ENCODE measurements at regions of chr21 and their contacts with region 1.

Region 1: DNA sequence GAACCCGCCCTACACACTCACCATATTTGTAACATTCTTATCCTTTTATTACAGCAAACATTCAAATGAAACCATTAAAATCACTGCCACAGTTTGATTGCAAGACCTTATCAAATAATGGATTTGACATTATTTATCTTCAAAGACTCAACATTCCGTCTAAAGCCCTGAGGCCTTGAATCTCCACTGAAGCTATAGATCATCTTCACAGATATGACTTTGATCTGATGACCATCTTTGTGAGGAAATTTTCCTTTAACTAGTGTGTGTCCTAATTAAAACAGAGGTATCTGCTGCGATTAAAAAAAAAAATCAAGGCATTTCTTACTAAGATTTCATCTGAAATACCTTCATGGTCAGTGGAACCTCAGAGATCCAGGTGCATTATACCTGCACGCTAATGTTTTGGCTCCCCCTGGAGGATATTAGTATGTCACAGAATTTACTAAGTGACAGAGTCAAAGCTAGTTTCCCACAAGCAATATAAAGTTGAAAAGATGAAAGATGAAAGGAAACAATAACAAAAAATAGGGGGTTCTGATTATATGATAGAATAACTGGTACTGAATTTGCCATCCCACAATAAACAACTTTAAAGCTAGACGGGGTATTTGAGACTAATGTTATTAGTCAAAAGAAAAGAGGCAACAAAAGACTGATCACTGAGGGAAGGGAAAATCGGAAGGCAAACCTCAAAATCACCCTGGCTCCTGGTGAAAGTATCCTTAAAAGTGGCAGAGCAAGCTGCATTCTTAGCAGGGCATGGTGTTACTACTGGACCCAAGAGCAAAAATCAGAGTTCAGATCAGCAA is 923.4 kb downstream of the NCAM2 start:
- DNase-seq: peak in 2 of 14 experiments; percentile 1 to 3
- ATAC-seq: no peak
- H3K4me3 ChIP-seq: no peak overlapping the region
- H3K4me3 Mint-ChIP-seq: no peak overlapping the region
- H3K27ac ChIP-seq: no peak overlapping the region
- H3K27ac Mint-ChIP-seq: no peak overlapping the region
- H3K4me1 ChIP-seq: no peaks in the 10 kb centered on the region
- H3K4me1 Mint-ChIP-seq: no peaks in the 10 kb centered on the region
- H3K27me3 ChIP-seq: no peaks in the 10 kb centered on the region
- H3K27me3 Mint-ChIP-seq: no peaks in the 10 kb centered on the region
- CTCF ChIP-seq: no peak

Region 2: DNA sequence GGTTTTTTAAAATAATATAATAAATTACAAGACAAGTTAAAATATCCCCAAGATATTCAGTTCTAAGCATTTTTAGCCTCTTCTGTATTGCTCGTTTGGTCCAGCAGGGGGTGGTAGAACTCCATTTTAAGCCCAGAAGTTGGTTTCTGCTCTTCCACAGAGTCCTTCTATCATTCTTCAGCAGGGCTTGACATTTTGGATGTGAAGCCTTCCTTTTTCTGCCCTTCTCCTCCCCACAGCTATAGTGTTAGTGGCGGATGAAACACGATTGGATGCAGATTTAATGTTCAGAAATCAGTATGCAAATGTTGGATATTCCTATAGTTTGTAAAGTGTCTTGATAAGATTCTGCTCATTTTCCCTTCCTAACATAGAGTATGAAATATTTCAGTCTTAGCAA is 922.0 kb before region 1 on chr21:
- CTCF ChIA-PET with region 1: no interaction called
- POLR2A ChIA-PET with region 1: no interaction called
- intact Hi-C with region 1: loop called in 1 of 2 experiments (anchors 10 kb)
- DNase-seq: peak in 5 of 14 experiments; percentile 9 to 42 (median 23)
- ATAC-seq: no peak
- H3K4me3 ChIP-seq: no peak overlapping the region
- H3K4me3 Mint-ChIP-seq: peak overlapping the region; percentile 57
- H3K27ac ChIP-seq: no peak overlapping the region
- H3K27ac Mint-ChIP-seq: no peak overlapping the region
- H3K4me1 ChIP-seq: peaks cover 16% of the 10 kb centered on the region
- H3K4me1 Mint-ChIP-seq: peaks cover 13% of the 10 kb centered on the region
- H3K27me3 ChIP-seq: peaks cover 5 to 30% of the 10 kb centered on the region in 2 experiments
- H3K27me3 Mint-ChIP-seq: peaks cover 35% of the 10 kb centered on the region
- CTCF ChIP-seq: peak; percentile 51